Activated CD4-positive, alpha-beta memory T cell treated with anti-CD3 and anti-CD28 coated beads, Interleukin-2, amount 10 ng/mL, durations not matched to agents 7 days and 5 days (primary cell): ENCODE measurements at regions of chr20 and their contacts with region 1.

Region 1: GRCh38 chr20:35490736-35491181 is 35.4 kb downstream of the CEP250 start:
- DNase-seq: peak; percentile 80
- H3K4me3 Mint-ChIP-seq: peak overlapping the region; percentile 97
- H3K27ac Mint-ChIP-seq: peak overlapping the region; percentile 99
- H3K4me1 Mint-ChIP-seq: peaks cover 53% of the 10 kb centered on the region
- H3K27me3 Mint-ChIP-seq: no peaks in the 10 kb centered on the region

Region 2: GRCh38 chr20:35454881-35455609 is 35.7 kb before region 1 on chr20 and contains the start of gene CEP250:
- CTCF ChIA-PET with region 1: interaction called, 7 read pairs
- POLR2A ChIA-PET with region 1: interaction called, 58 read pairs
- DNase-seq: peak; percentile 94
- H3K4me3 Mint-ChIP-seq: peak within 1 kb of the TSS; percentile 87
- H3K27ac Mint-ChIP-seq: peak within 1 kb of the TSS; percentile 95
- H3K4me1 Mint-ChIP-seq: peaks cover 29% of the 10 kb centered on the region
- H3K27me3 Mint-ChIP-seq: no peaks in the 10 kb centered on the region
- total RNA-seq, gene CEP250: 70.3 to 71.2 TPM

Region 3: GRCh38 chr20:35474303-35474871 is 16.4 kb before region 1 on chr20:
- CTCF ChIA-PET with region 1: interaction called, 4 read pairs
- POLR2A ChIA-PET with region 1: interaction called, 12 read pairs
- DNase-seq: no peak
- H3K4me3 Mint-ChIP-seq: no peak overlapping the region
- H3K27ac Mint-ChIP-seq: no peak overlapping the region
- H3K4me1 Mint-ChIP-seq: no peaks in the 10 kb centered on the region
- H3K27me3 Mint-ChIP-seq: no peaks in the 10 kb centered on the region

Region 4: GRCh38 chr20:35541783-35542588 is 51.2 kb after region 1 on chr20 and contains the start of gene ERGIC3:
- CTCF ChIA-PET with region 1: no interaction called
- POLR2A ChIA-PET with region 1: interaction called, 13 read pairs
- DNase-seq: peak; percentile 98
- H3K4me3 Mint-ChIP-seq: peak within 1 kb of the TSS; percentile 89
- H3K27ac Mint-ChIP-seq: peak within 1 kb of the TSS; percentile 84
- H3K4me1 Mint-ChIP-seq: peaks cover 23% of the 10 kb centered on the region
- H3K27me3 Mint-ChIP-seq: no peaks in the 10 kb centered on the region
- total RNA-seq, gene ERGIC3: 126 TPM

Region 5: GRCh38 chr20:35583636-35584560 is 93.1 kb after region 1 on chr20:
- CTCF ChIA-PET with region 1: no interaction called
- POLR2A ChIA-PET with region 1: no interaction called
- DNase-seq: no peak
- H3K4me3 Mint-ChIP-seq: no peak overlapping the region
- H3K27ac Mint-ChIP-seq: no peak overlapping the region
- H3K4me1 Mint-ChIP-seq: no peaks in the 10 kb centered on the region
- H3K27me3 Mint-ChIP-seq: peaks cover 2% of the 10 kb centered on the region

Region 6: DNA sequence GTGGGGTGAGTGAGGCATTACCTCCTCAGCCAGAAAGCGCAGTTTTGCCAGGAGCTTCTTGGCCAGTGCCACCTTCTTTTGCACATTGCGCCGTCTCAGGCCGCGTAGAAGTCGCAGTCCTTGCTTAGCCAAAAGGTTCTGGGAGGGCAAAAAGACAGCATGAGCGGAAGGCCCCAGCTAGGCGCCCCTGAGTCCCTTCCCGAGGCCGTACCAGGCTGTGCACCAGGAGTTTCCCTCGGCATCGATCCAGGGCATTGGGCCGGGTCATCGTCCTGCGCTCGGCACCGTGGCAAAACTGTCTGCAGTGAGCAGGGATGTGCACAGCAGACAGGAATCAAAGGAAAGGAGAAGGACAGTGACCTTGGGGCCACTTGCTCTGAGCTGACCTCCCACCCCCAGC is 104.7 kb after region 1 on chr20:
- CTCF ChIA-PET with region 1: no interaction called
- POLR2A ChIA-PET with region 1: no interaction called
- DNase-seq: no peak
- H3K4me3 Mint-ChIP-seq: no peak overlapping the region
- H3K27ac Mint-ChIP-seq: no peak overlapping the region
- H3K4me1 Mint-ChIP-seq: no peaks in the 10 kb centered on the region
- H3K27me3 Mint-ChIP-seq: peaks cover 40% of the 10 kb centered on the region

Region 7: GRCh38 chr20:35664544-35665221 is 173.9 kb after region 1 on chr20 and contains the starts of genes CPNE1 and RBM12:
- CTCF ChIA-PET with region 1: no interaction called
- POLR2A ChIA-PET with region 1: interaction called, 27 read pairs
- DNase-seq: peak; percentile 95
- H3K4me3 Mint-ChIP-seq: peak within 1 kb of the TSS; percentile 95
- H3K27ac Mint-ChIP-seq: peak within 1 kb of the TSS; percentile 98
- H3K4me1 Mint-ChIP-seq: peaks cover 46% of the 10 kb centered on the region
- H3K27me3 Mint-ChIP-seq: no peaks in the 10 kb centered on the region
- total RNA-seq, gene CPNE1: 239 to 243 TPM
- total RNA-seq, gene RBM12: 115 to 116 TPM